ENCODE measurements at regions of chr5 and their contacts with region 1.

Region 1: DNA sequence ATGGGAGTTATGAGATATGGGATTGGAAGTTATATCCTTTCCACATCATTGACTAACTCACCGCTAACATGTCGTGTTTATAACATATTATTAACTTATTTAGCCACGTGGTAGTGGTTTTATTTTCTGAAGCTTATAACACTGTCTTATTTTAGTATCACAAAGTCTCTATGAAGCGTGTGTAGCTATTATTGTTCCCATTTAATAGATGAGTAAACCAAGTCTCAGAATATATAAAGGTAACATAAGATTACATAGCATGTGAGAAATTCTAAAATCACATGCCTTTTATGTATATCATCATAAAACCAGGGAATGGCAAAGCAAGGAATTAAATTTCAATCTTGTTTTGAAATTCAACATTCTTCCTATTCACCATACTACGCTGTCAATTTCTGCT is 15.3 kb downstream of the AP3B1 start:
- DNase-seq: no peak
- ATAC-seq: no peak
- H3K4me3 ChIP-seq: no peak overlapping the region
- H3K27ac ChIP-seq: no peak overlapping the region
- H3K4me1 ChIP-seq: no peaks in the 10 kb centered on the region
- H3K27me3 ChIP-seq: no peaks in the 10 kb centered on the region
- CTCF ChIP-seq: no peak
- POLR2A ChIP-seq: no peak
- RAD21 ChIP-seq: no peak

Region 2: DNA sequence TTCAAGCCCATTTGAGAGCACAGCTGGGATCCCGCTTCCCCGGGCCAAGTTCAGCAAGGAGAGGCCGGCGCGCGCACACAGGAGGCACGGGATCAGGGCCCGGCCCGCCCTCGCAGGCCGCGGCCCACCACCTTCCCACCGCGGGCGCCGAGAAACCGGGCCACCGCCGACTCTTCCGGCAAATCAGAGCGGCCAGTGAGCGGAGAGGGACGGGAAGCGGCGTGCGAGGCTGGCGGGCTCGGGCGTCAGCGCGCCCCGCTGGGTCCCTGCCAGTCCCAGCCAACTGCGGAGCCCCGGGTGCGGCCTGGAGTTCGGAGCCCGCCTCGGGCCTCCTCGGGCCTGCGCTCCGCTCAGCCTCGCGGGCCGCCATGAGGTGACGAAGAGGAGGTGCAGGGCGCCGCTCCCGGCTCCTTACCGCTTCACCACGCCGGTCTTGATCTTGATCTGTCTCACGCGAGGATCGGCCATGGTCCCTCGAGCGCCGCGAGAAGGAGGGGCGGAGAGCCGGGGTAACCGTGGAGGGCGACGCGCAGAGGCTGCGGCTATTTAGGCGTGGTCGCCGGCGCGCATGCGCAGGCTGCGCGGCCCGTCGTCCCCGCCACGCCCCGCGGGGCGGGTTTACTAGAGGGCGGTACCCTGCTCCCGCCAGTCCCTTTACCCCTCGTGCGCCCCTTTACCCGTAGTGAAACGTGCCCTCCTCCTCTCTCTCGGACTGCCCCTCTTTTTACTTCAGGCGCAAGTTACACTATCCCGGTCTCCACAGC is 503.2 kb before region 1 on chr5 and contains the start of gene TBCA:
- CTCF ChIA-PET with region 1: no interaction called
- POLR2A ChIA-PET with region 1: interaction called, 11 read pairs
- dilution Hi-C with region 1: no loop called
- in situ Hi-C with region 1: no loop called
- intact Hi-C with region 1: no loop called
- DNase-seq: peak; percentile 91
- ATAC-seq: peak; percentile 96
- H3K4me3 ChIP-seq: peak within 1 kb of the TSS; percentile 74
- H3K27ac ChIP-seq: peak within 1 kb of the TSS; percentile 88
- H3K4me1 ChIP-seq: peaks cover 6% of the 10 kb centered on the region; the same call in 1 of the 2 replicates
- H3K27me3 ChIP-seq: no peaks in the 10 kb centered on the region
- CTCF ChIP-seq: peak; percentile 22; the same call in 1 of the 2 replicates
- POLR2A ChIP-seq: peak; percentile 81
- RAD21 ChIP-seq: 0 out of 2 replicates have a peak, but pooled peaks have one; percentile 13
- total RNA-seq, gene TBCA: 6.1 and 28.6 TPM in 2 replicates

Region 3: DNA sequence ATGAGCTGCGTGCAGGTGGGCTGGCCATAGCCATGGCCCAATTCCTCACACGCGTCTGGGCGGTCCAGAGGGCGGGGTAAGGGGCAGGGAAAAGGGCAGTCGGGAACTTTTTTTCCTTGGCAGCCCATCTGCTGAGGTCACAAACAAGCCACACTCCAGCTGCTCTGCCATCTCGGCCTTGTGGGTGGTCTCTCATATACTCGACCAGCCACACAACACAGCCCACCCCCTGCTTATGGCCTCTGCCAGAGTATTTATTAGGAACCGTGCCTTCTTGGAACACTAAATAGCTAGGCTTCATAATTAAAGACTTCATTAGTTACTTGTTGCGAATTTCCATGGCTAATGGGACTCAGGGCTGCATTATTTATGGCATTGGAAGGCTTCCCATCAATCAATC is 467.9 kb after region 1 on chr5:
- CTCF ChIA-PET with region 1: no interaction called
- POLR2A ChIA-PET with region 1: no interaction called
- dilution Hi-C with region 1: no loop called
- in situ Hi-C with region 1: no loop called
- intact Hi-C with region 1: no loop called
- DNase-seq: no peak
- ATAC-seq: no peak
- H3K4me3 ChIP-seq: no peak overlapping the region
- H3K27ac ChIP-seq: peak overlapping the region; percentile 85; the same call in 1 of the 2 replicates
- H3K4me1 ChIP-seq: peaks cover 14% of the 10 kb centered on the region
- H3K27me3 ChIP-seq: peaks cover 6% of the 10 kb centered on the region; the same call in 1 of the 2 replicates
- CTCF ChIP-seq: no peak
- POLR2A ChIP-seq: no peak
- RAD21 ChIP-seq: no peak

Measured in IMR-90 (cell line).